ENCODE measurements at regions of chr1 and their contacts with region 1.

Region 1: DNA sequence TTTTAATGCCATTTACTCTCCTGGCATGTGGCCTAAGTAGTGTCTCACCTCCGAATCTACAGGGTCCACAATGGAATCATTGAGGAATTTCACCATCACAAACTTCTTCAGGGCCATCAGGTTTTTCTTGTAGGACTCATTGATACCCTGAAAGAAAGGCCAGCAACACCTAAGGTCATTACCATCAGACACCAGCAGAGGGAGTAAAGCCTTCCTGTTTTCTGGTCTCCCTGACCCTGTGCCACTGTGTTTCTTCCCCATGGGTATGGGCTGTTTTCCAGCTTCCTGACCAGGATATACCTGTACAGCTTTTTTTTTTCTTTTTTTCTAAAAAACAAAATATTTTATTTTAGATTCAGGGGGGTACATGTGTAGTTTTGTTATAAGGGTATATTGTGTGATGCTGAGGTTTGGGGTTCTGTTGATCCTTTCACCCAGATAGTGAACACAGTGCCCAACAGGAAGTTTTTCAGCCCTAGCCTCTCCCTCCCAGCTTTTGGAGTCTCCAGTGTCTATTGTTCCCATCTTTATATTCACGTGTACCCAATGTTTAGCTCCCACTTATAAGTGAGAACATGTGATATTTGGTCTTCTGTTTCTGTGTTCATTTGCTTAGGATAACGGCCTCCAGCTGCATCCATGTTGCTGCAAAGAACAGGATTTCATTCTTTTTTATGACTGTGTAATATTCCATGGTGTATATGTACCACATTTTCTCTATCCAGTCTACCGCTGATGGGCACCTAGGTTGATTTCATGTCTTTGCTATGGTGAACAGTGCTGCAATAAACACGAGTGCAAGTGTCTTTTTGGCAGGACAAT is 18.3 kb downstream of the PPT1 start:
- DNase-seq: peak in 4 of 5 donors; percentile 10 to 49 (median 33)
- H3K4me3 ChIP-seq: no peak overlapping the region
- H3K4me3 Mint-ChIP-seq: no peak overlapping the region
- H3K27ac ChIP-seq: no peak overlapping the region
- H3K27ac Mint-ChIP-seq: peak overlapping the region in 6 of 8 donors; percentile 12 to 84 (median 80)
- H3K4me1 ChIP-seq: no peaks in the 10 kb centered on the region
- H3K4me1 Mint-ChIP-seq: peaks cover 6 to 9% (median 7%) of the 10 kb centered on the region in 3 donors
- H3K27me3 ChIP-seq: no peaks in the 10 kb centered on the region
- H3K27me3 Mint-ChIP-seq: no peaks in the 10 kb centered on the region

Region 2: DNA sequence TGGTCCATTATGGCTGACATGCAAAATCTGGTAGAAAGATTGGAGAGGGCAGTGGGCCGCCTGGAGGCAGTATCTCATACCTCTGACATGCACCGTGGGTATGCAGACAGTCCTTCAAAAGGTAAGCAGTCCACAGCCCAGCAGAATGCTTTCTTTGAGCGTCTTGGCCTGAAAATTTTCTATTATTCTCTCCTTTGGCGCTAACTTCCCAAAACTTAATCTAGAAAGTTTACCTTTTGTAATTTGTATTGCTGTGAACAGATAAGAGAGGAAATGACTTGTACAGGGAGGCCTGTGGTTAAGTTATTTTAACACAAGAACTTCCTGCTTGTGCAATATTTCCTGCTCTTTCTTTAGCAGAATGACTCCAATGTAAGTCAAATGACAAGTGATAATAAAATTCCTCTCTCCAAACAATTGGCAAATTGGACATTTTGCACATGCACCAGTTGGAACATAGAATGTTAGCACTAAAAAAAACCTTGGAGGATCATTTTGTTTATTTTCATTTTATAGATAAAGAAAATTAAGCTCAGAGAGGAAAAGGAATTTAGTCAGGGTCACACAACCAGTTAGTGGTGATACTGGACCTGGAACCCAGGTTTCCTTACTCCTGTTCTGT is 19.3 kb before region 1 on chr1:
- CTCF ChIA-PET with region 1: interaction called, 4 read pairs
- POLR2A ChIA-PET with region 1: interaction called, 10 read pairs
- DNase-seq: peak in 3 of 5 donors; percentile 12 to 56 (median 48)
- H3K4me3 ChIP-seq: peak overlapping the region; percentile 16
- H3K4me3 Mint-ChIP-seq: peak overlapping the region; percentile 56 to 86 (median 67)
- H3K27ac ChIP-seq: peak overlapping the region; percentile 58
- H3K27ac Mint-ChIP-seq: peak overlapping the region; percentile 77 to 94 (median 86)
- H3K4me1 ChIP-seq: peaks cover 91% of the 10 kb centered on the region
- H3K4me1 Mint-ChIP-seq: peaks cover 91 to 95% (median 94%) of the 10 kb centered on the region in 3 donors
- H3K27me3 ChIP-seq: no peaks in the 10 kb centered on the region
- H3K27me3 Mint-ChIP-seq: no peaks in the 10 kb centered on the region

Region 3: GRCh38 chr1:40067023-40067422 is 11.7 kb before region 1 on chr1:
- CTCF ChIA-PET with region 1: interaction called, 13 read pairs
- POLR2A ChIA-PET with region 1: no interaction called
- DNase-seq: no peak
- H3K4me3 ChIP-seq: no peak overlapping the region
- H3K4me3 Mint-ChIP-seq: no peak overlapping the region
- H3K27ac ChIP-seq: no peak overlapping the region
- H3K27ac Mint-ChIP-seq: peak overlapping the region; percentile 30 to 89 (median 60)
- H3K4me1 ChIP-seq: peaks cover 42% of the 10 kb centered on the region
- H3K4me1 Mint-ChIP-seq: peaks cover 39 to 48% (median 48%) of the 10 kb centered on the region in 3 donors
- H3K27me3 ChIP-seq: no peaks in the 10 kb centered on the region
- H3K27me3 Mint-ChIP-seq: no peaks in the 10 kb centered on the region

Region 4: DNA sequence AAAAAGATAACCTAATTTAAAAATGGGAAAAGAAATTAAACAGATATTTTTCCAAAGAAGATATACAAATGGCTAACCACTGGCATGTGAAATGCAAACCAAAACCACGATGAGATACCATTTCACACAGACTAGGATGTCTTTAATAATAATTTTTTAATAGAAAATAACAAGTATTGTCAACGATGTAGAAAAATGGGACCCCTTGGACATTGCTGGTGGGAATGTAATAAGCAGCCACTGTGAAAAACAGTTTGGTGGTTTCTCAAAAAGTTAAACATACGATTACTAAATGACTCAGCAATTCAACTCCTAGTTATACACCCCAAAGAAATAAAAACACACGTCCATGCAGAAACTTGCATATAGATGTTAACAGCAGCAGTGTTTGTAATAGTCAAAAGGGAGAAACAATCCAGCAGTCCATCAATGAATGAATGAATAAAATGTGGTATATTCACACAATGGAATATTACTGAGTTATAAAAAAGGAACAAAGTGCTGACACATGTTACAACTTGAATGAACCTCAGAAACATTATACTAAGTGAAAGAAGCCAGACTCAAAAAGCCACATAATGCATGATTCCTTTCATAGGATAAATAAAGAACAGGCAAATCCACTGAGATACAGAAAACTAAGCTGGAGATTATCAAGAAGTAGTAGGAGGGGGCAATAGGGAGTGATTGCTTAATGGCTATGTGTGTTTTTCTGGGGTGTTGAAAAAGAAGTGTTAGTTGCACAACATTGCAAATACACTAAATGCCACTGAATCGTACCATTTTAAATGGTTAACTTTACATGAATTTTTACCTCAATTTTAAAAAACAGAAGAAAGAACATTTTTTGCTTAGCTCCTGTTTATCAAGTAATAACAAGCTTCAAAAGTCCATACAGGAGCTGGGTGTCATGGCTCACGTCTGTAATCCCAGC is 14.2 kb after region 1 on chr1:
- CTCF ChIA-PET with region 1: interaction called, 12 read pairs
- POLR2A ChIA-PET with region 1: no interaction called
- DNase-seq: no peak
- H3K4me3 ChIP-seq: no peak overlapping the region
- H3K4me3 Mint-ChIP-seq: peak overlapping the region in 1 of 7 donors; percentile 12
- H3K27ac ChIP-seq: no peak overlapping the region
- H3K27ac Mint-ChIP-seq: peak overlapping the region in 6 of 8 donors; percentile 6 to 78 (median 48)
- H3K4me1 ChIP-seq: peaks cover 17% of the 10 kb centered on the region
- H3K4me1 Mint-ChIP-seq: peaks cover 27 to 47% (median 39%) of the 10 kb centered on the region in 3 donors
- H3K27me3 ChIP-seq: no peaks in the 10 kb centered on the region
- H3K27me3 Mint-ChIP-seq: peaks cover 0 to 3% of the 10 kb centered on the region in 2 donors

Region 5: GRCh38 chr1:40132383-40133311 is 53.9 kb after region 1 on chr1:
- CTCF ChIA-PET with region 1: no interaction called
- POLR2A ChIA-PET with region 1: no interaction called
- DNase-seq: no peak
- H3K4me3 ChIP-seq: no peak overlapping the region
- H3K4me3 Mint-ChIP-seq: no peak overlapping the region
- H3K27ac ChIP-seq: no peak overlapping the region
- H3K27ac Mint-ChIP-seq: no peak overlapping the region
- H3K4me1 ChIP-seq: no peaks in the 10 kb centered on the region
- H3K4me1 Mint-ChIP-seq: peaks cover 0 to 1% (median 0%) of the 10 kb centered on the region in 3 donors
- H3K27me3 ChIP-seq: no peaks in the 10 kb centered on the region
- H3K27me3 Mint-ChIP-seq: peaks cover 18 to 33% of the 10 kb centered on the region in 2 donors